Mammary epithelial cell (primary cell): ENCODE measurements at regions of chr9 and their contacts with region 1.

Region 1: DNA sequence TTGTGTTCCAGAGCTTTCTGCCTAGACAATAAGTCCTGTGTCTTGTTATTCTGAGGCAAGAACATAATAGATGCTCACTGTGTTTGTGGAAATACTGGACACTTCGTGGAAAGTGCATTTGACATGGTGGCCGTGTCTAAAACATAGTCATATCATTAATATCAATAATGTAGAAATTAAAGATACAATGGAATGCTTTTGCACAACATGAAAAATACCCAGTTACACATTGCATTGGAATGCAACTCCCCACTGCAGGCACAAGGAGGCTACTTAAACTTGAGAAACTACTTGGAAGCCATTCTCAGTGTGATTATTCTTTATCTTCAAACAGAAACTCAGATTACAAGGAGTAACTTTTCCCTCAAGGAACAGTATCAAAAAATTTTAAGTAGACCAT is 145.3 kb upstream of the ZNF462 start:
- DNase-seq: peak; percentile 81
- H3K4me3 ChIP-seq: peak overlapping the region in 1 of 3 experiments; percentile 29
- H3K27ac ChIP-seq: peak overlapping the region; percentile 65
- H3K4me1 ChIP-seq: peaks cover 22% of the 10 kb centered on the region
- H3K27me3 ChIP-seq: no peaks in the 10 kb centered on the region
- CTCF ChIP-seq: peak; percentile 11 to 25

Region 2: GRCh38 chr9:106697750-106698502 is 19.8 kb before region 1 on chr9:
- CTCF ChIA-PET with region 1: no interaction called
- dilution Hi-C with region 1: no loop called
- in situ Hi-C with region 1: no loop called
- intact Hi-C with region 1: loop called (anchors 2 kb)
- DNase-seq: peak; percentile 62
- H3K4me3 ChIP-seq: peak overlapping the region; percentile 17 to 38 (median 36)
- H3K27ac ChIP-seq: no peak overlapping the region
- H3K4me1 ChIP-seq: peaks cover 12% of the 10 kb centered on the region
- H3K27me3 ChIP-seq: no peaks in the 10 kb centered on the region
- CTCF ChIP-seq: no peak